GM12878 (cell line): ENCODE measurements at regions of chr11 and their contacts with region 1.

Region 1: GRCh38 chr11:130300567-130300966 is 14.2 kb downstream of the ZBTB44 start:
- DNase-seq: no peak
- ATAC-seq: peak; percentile 84
- H3K4me3 ChIP-seq: no peak overlapping the region; the same call in 1 of the 2 replicates
- H3K27ac ChIP-seq: peak overlapping the region; percentile 37; the same call in 1 of the 2 replicates
- H3K4me1 ChIP-seq: peaks cover 22% of the 10 kb centered on the region
- H3K27me3 ChIP-seq: no peaks in the 10 kb centered on the region
- CTCF ChIP-seq: no peak
- EP300 ChIP-seq: peak in 1 of 2 experiments; percentile 23; a peak in 1 of 4 replicates
- POLR2A ChIP-seq: no peak
- RAD21 ChIP-seq: no peak

Region 2: DNA sequence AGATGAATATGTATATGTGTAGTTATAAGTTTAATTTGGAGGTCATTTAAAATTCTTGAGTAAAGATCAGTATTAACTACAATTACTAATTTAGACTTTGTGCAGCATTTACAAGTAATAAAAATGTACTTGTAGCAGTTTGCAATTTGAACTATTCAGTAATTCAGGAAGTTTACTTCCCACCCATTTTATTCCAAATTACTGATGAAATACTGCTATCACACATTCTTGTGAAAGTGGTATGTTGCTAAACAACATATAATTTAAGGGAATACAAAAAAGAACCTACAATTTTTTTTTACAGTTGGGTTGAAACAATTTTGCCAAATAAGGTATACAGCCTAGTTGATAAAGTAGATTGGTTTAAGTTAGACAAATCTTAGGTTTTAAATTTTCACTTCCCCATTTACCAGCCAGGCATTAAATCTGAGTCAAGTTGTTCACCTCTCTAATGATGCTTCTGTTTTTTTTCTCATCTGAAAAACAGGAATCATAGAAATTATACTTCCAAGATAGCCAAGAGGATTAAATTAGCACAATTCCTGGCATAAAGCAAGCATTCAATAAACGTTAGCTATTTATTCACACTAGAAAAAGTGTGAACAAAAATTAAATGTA is 31.1 kb before region 1 on chr11:
- CTCF ChIA-PET with region 1: interaction called, 6 read pairs
- POLR2A ChIA-PET with region 1: interaction called, 3 read pairs
- RAD21 ChIA-PET with region 1: interaction called, 4 read pairs
- SMC1A ChIA-PET with region 1: interaction called, 10 read pairs
- in situ Hi-C with region 1: no loop called
- intact Hi-C with region 1: no loop called
- DNase-seq: peak; percentile 45
- ATAC-seq: peak; percentile 99
- H3K4me3 ChIP-seq: no peak overlapping the region
- H3K27ac ChIP-seq: peak overlapping the region; percentile 79
- H3K4me1 ChIP-seq: peaks cover 11% of the 10 kb centered on the region; the same call in 1 of the 2 replicates
- H3K27me3 ChIP-seq: no peaks in the 10 kb centered on the region
- CTCF ChIP-seq: no peak
- EP300 ChIP-seq: peak in 1 of 2 experiments; percentile 74; a peak in 3 of 4 replicates
- POLR2A ChIP-seq: no peak
- RAD21 ChIP-seq: no peak

Region 3: GRCh38 chr11:130278151-130278550 is 22.4 kb before region 1 on chr11:
- CTCF ChIA-PET with region 1: interaction called, 7 read pairs
- POLR2A ChIA-PET with region 1: interaction called, 3 read pairs
- RAD21 ChIA-PET with region 1: interaction called, 5 read pairs
- SMC1A ChIA-PET with region 1: interaction called, 14 read pairs
- in situ Hi-C with region 1: no loop called
- intact Hi-C with region 1: no loop called
- DNase-seq: peak; percentile 48
- ATAC-seq: peak; percentile 97
- H3K4me3 ChIP-seq: no peak overlapping the region
- H3K27ac ChIP-seq: no peak overlapping the region; the same call in 1 of the 2 replicates
- H3K4me1 ChIP-seq: peaks cover 8% of the 10 kb centered on the region
- H3K27me3 ChIP-seq: no peaks in the 10 kb centered on the region
- CTCF ChIP-seq: no peak
- EP300 ChIP-seq: 0 out of 4 replicates have a peak, but pooled peaks have one; percentile 25 to 28
- POLR2A ChIP-seq: no peak
- RAD21 ChIP-seq: no peak

Region 4: DNA sequence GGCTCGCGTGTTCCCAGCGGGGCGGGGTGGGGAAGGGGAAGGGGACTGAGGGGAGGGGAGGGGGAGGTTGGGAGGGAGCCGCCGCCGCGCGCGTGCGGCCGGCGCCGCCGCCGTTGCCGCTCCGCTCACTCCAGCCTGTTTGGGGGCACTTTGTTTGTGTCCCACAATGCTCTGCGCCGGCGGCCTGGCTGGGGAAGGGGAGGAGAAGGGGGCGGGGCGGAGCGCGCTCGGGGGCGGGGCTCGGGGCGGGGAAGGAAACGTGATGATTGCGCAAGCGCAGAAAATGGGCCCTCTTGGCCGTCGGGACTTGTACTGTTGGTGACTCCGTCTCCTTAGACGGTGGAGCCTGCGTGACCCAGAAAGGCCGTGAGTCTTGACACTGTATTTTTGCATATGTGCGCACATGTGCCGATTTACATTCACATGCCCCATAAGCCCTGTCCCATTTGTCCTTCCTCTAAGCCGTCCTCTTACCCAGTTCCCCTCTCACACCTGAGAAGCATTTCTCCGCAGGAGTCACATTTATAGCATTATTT is 14.3 kb after region 1 on chr11 and contains the start of gene ZBTB44:
- CTCF ChIA-PET with region 1: interaction called, 9 read pairs
- POLR2A ChIA-PET with region 1: interaction called, 24 read pairs
- RAD21 ChIA-PET with region 1: interaction called, 21 read pairs
- SMC1A ChIA-PET with region 1: interaction called, 40 read pairs
- in situ Hi-C with region 1: no loop called
- intact Hi-C with region 1: no loop called
- DNase-seq: peak; percentile 74
- ATAC-seq: peak; percentile 86
- H3K4me3 ChIP-seq: peak within 1 kb of the TSS; percentile 75
- H3K27ac ChIP-seq: peak within 1 kb of the TSS; percentile 78
- H3K4me1 ChIP-seq: peaks cover 7% of the 10 kb centered on the region; the same call in 1 of the 2 replicates
- H3K27me3 ChIP-seq: no peaks in the 10 kb centered on the region
- CTCF ChIP-seq: no peak
- EP300 ChIP-seq: no peak
- POLR2A ChIP-seq: peak; percentile 64
- RAD21 ChIP-seq: no peak
- polyA plus RNA-seq, gene ZBTB44: 3.4 to 5.9 TPM